Heart left ventricle (tissue), 16 donors: ENCODE measurements at regions of chr18 and their contacts with region 1.

Region 1: DNA sequence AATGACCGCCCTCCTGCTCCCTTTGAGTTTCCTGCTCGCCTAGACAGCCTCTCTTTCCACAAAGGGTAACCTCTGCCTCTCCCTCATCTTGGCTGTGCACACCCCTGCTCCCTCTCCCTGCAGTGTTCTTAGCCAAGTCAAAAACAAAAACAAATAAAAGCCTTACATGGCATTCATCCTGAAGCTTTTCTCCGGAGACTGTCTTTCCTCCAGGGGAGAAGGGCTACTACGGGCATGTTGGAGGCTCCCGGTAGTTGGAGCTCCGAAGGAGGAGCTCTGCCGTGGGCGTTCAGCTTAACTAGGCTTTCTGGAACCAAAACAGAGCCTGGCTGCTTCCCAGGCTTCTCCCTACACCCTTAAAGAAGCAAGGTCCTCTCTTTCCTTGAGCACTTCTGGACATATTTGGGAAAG is 104.2 kb downstream of the TPGS2 start:
- DNase-seq: peak in 1 of 5 donors; percentile 42
- ATAC-seq: peak in 2 of 4 donors; percentile 18 to 23
- H3K4me3 ChIP-seq: peak overlapping the region in 3 of 12 donors; percentile 19 to 29 (median 27)
- H3K27ac ChIP-seq: peak overlapping the region in 3 of 12 donors; percentile 24 to 39 (median 26)
- H3K4me1 ChIP-seq: peaks cover 0 to 32% (median 6%) of the 10 kb centered on the region in 12 donors
- H3K27me3 ChIP-seq: no peaks in the 10 kb centered on the region
- CTCF ChIP-seq: no peak
- POLR2A ChIP-seq: no peak

Region 2: GRCh38 chr18:36661999-36662398 is 62.6 kb before region 1 on chr18:
- intact Hi-C with region 1: loop called in 1 of 10 experiments (anchors 10 kb)
- DNase-seq: peak in 1 of 5 donors; percentile 33
- ATAC-seq: peak in 1 of 4 donors; percentile 26
- H3K4me3 ChIP-seq: no peak overlapping the region
- H3K27ac ChIP-seq: no peak overlapping the region
- H3K4me1 ChIP-seq: peaks cover 0 to 20% (median 2%) of the 10 kb centered on the region in 12 donors
- H3K27me3 ChIP-seq: no peaks in the 10 kb centered on the region
- CTCF ChIP-seq: peak in 5 of 12 donors; percentile 10 to 28 (median 23)
- POLR2A ChIP-seq: no peak

Region 3: DNA sequence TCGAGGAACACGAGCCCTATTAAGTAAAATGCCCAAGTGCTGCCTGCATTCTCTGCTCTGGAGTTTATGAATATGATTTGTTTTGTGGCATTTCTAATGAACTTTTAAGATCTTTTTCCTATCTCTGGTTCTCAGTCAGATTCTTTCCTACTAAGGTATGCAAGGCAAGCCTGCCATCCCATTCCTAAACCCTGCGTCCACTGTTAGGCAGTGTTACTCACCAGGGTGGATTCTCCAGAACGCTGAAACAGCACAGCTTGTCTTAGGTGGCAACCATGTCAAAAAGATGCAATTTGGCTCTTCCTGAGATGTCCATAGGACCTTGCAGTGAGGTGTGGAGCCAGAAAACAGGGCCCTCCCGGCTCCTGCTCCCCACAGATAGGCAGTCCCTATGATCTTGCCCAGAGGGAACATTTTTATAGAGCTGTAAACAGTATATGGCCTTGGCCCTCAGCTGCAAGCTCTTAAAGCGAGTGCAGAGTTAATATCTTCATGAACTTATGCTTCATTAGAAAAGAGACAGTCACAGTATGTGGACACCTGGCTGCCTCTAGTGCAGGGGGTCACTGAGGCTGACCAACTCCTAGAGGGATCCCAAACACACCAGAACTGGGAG is 19.8 kb after region 1 on chr18:
- intact Hi-C with region 1: no loop called
- DNase-seq: no peak
- ATAC-seq: peak in 1 of 4 donors; percentile 13
- H3K4me3 ChIP-seq: no peak overlapping the region
- H3K27ac ChIP-seq: no peak overlapping the region
- H3K4me1 ChIP-seq: no peaks in the 10 kb centered on the region
- H3K27me3 ChIP-seq: no peaks in the 10 kb centered on the region
- CTCF ChIP-seq: no peak
- POLR2A ChIP-seq: no peak